T-cell (primary cell): ENCODE measurements at regions of chr6 and their contacts with region 1.

Region 1: GRCh38 chr6:136792410-136793262 is at the start of gene MAP3K5:
- DNase-seq: peak; percentile 90 to 97 (median 95)
- ATAC-seq: peak; percentile 80 to 86 (median 84)
- H3K4me3 ChIP-seq: peak within 1 kb of the TSS; percentile 87 to 90
- H3K4me3 Mint-ChIP-seq: peak within 1 kb of the TSS; percentile 96 to 98 (median 97)
- H3K27ac ChIP-seq: peak within 1 kb of the TSS; percentile 97
- H3K27ac Mint-ChIP-seq: peak within 1 kb of the TSS; percentile 92 to 96
- H3K4me1 ChIP-seq: peaks cover 13 to 24% of the 10 kb centered on the region in 2 experiments
- H3K4me1 Mint-ChIP-seq: peaks cover 36 to 41% (median 40%) of the 10 kb centered on the region in 3 donors
- H3K27me3 ChIP-seq: no peaks in the 10 kb centered on the region
- H3K27me3 Mint-ChIP-seq: no peaks in the 10 kb centered on the region
- total RNA-seq, gene MAP3K5: 17.8 to 29.2 (median 20.6) TPM

Region 2: GRCh38 chr6:135870722-135871121 is 921.9 kb before region 1 on chr6:
- CTCF ChIA-PET with region 1: no interaction called
- POLR2A ChIA-PET with region 1: no interaction called
- DNase-seq: no peak
- ATAC-seq: no peak
- H3K4me3 ChIP-seq: no peak overlapping the region
- H3K4me3 Mint-ChIP-seq: no peak overlapping the region
- H3K27ac ChIP-seq: no peak overlapping the region
- H3K27ac Mint-ChIP-seq: peak overlapping the region in 1 of 2 donors; percentile 36
- H3K4me1 ChIP-seq: no peaks in the 10 kb centered on the region
- H3K4me1 Mint-ChIP-seq: peaks cover 3 to 8% (median 6%) of the 10 kb centered on the region in 3 donors
- H3K27me3 ChIP-seq: no peaks in the 10 kb centered on the region
- H3K27me3 Mint-ChIP-seq: no peaks in the 10 kb centered on the region

Region 3: GRCh38 chr6:136607932-136608772 is 184.5 kb before region 1 on chr6:
- CTCF ChIA-PET with region 1: interaction called, 6 to 15 read pairs
- POLR2A ChIA-PET with region 1: no interaction called
- DNase-seq: peak; percentile 35 to 84 (median 72)
- ATAC-seq: peak; percentile 88 to 96 (median 92)
- H3K4me3 ChIP-seq: no peak overlapping the region
- H3K4me3 Mint-ChIP-seq: no peak overlapping the region
- H3K27ac ChIP-seq: no peak overlapping the region
- H3K27ac Mint-ChIP-seq: peak overlapping the region in 1 of 2 donors; percentile 5
- H3K4me1 ChIP-seq: no peaks in the 10 kb centered on the region
- H3K4me1 Mint-ChIP-seq: peaks cover 9 to 18% (median 14%) of the 10 kb centered on the region in 3 donors
- H3K27me3 ChIP-seq: no peaks in the 10 kb centered on the region
- H3K27me3 Mint-ChIP-seq: no peaks in the 10 kb centered on the region

Region 4: GRCh38 chr6:136655239-136656014 is 137.2 kb before region 1 on chr6:
- CTCF ChIA-PET with region 1: interaction called, 3 to 15 read pairs
- POLR2A ChIA-PET with region 1: no interaction called
- DNase-seq: no peak
- ATAC-seq: no peak
- H3K4me3 ChIP-seq: no peak overlapping the region
- H3K4me3 Mint-ChIP-seq: no peak overlapping the region
- H3K27ac ChIP-seq: no peak overlapping the region
- H3K27ac Mint-ChIP-seq: peak overlapping the region in 1 of 2 donors; percentile 36
- H3K4me1 ChIP-seq: no peaks in the 10 kb centered on the region
- H3K4me1 Mint-ChIP-seq: no peaks in the 10 kb centered on the region
- H3K27me3 ChIP-seq: no peaks in the 10 kb centered on the region
- H3K27me3 Mint-ChIP-seq: no peaks in the 10 kb centered on the region

Region 5: DNA sequence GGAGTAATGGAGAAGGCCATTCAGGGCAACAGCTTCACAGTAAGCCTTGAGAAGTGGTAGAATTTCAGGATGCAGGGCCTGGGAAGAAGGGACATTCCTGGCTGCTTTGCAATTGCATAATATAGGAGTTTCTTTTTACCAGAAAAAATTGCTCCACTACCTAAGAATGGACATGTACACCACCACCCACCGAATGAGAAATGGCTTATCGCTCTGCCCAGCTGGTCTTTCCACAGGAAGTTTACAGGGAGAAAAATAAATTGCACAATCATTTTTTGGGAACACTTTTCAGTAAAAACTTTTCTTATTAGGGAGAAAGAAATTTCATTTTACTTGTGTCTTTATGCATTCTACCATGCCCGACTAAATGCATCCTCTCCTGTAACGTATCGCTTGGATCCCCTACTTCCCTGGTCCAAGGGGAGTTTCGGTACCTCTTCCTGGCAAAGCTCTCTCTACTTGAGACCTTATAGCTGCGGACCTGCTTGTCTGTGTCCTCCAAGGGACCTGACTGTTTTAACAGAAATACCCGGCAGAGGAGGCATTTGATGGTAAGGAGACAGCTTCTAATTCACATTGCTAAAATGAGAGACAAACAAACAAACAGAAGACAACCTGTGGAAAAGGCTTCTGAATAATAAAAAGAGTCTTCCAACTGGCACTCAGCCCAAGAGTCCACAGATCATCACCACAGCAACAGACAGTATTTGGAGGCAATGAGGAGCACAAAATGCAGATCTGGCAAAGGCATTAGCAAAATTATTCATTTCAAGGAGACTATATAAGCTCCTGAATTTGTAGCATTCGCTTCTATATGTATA is 54.6 kb before region 1 on chr6:
- CTCF ChIA-PET with region 1: interaction called, 9 to 21 read pairs
- POLR2A ChIA-PET with region 1: interaction called in 1 of 2 experiments, 3 read pairs
- DNase-seq: no peak
- ATAC-seq: no peak
- H3K4me3 ChIP-seq: no peak overlapping the region
- H3K4me3 Mint-ChIP-seq: no peak overlapping the region
- H3K27ac ChIP-seq: no peak overlapping the region
- H3K27ac Mint-ChIP-seq: no peak overlapping the region
- H3K4me1 ChIP-seq: peaks cover 0 to 11% of the 10 kb centered on the region in 2 experiments
- H3K4me1 Mint-ChIP-seq: peaks cover 28 to 65% (median 46%) of the 10 kb centered on the region in 3 donors
- H3K27me3 ChIP-seq: no peaks in the 10 kb centered on the region
- H3K27me3 Mint-ChIP-seq: no peaks in the 10 kb centered on the region

Region 6: GRCh38 chr6:136761227-136761922 is 31.3 kb before region 1 on chr6:
- CTCF ChIA-PET with region 1: interaction called, 9 to 19 read pairs
- POLR2A ChIA-PET with region 1: interaction called, 8 read pairs
- DNase-seq: peak in 9 of 35 experiments; percentile 5 to 56 (median 23)
- ATAC-seq: peak; percentile 55 to 72 (median 64)
- H3K4me3 ChIP-seq: peak overlapping the region in 1 of 2 donors; percentile 30
- H3K4me3 Mint-ChIP-seq: peak overlapping the region; percentile 59 to 82 (median 72)
- H3K27ac ChIP-seq: peak overlapping the region; percentile 84
- H3K27ac Mint-ChIP-seq: peak overlapping the region; percentile 93
- H3K4me1 ChIP-seq: peaks cover 17 to 65% of the 10 kb centered on the region in 2 experiments
- H3K4me1 Mint-ChIP-seq: peaks cover 60 to 78% (median 66%) of the 10 kb centered on the region in 3 donors
- H3K27me3 ChIP-seq: no peaks in the 10 kb centered on the region
- H3K27me3 Mint-ChIP-seq: no peaks in the 10 kb centered on the region

Region 7: DNA sequence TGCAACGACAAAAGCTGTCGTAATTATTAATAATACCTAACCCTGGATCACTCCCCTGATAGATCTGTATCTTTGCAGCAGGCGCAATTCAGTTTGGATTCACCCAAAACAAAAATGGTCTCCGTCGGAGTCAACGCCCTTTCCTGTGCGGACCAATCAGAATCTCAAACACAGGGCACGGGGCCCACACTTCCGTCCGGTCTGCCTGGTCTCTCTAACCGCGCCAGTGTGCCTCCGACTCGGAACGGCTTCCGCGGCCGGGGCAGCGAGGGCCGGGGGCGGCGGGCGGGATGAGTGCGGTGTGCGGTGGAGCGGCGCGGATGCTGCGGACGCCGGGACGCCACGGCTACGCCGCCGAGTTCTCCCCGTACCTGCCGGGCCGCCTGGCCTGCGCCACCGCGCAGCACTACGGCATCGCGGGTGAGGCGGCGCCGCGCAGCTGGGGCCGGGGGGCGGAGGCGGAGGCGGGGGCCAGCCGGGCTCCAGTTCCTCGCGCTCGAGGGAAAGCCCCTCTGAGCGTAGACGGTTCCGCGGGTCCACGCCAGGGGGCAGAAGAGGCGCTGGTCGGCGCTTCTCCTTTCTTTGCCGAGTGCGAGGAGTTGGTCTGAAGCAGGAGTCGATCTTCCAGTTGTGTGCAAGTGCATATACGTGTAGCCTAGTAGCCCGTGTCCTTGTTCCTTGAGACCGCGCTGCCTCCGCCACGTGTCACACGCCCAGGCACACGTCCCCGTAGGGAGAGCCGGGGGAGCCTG is 29.9 kb after region 1 on chr6 and contains the start of gene PEX7:
- CTCF ChIA-PET with region 1: interaction called, 6 to 23 read pairs
- POLR2A ChIA-PET with region 1: no interaction called
- DNase-seq: peak; percentile 76 to 93 (median 85)
- ATAC-seq: peak; percentile 94 to 96 (median 94)
- H3K4me3 ChIP-seq: peak within 1 kb of the TSS; percentile 89 to 90
- H3K4me3 Mint-ChIP-seq: peak within 1 kb of the TSS; percentile 86 to 92 (median 87)
- H3K27ac ChIP-seq: peak within 1 kb of the TSS; percentile 75
- H3K27ac Mint-ChIP-seq: peak within 1 kb of the TSS; percentile 93 to 95
- H3K4me1 ChIP-seq: peaks cover 0 to 12% of the 10 kb centered on the region in 2 experiments
- H3K4me1 Mint-ChIP-seq: peaks cover 30 to 42% (median 40%) of the 10 kb centered on the region in 3 donors
- H3K27me3 ChIP-seq: no peaks in the 10 kb centered on the region
- H3K27me3 Mint-ChIP-seq: no peaks in the 10 kb centered on the region
- total RNA-seq, gene PEX7: 4.3 to 5.5 (median 4.9) TPM